Transverse colon (tissue), 4 donors: ENCODE measurements at regions of chr9 and their contacts with region 1.

Region 1: GRCh38 chr9:135840539-135840938 is 66.8 kb downstream of the CAMSAP1 start:
- DNase-seq: no peak
- H3K4me3 ChIP-seq: no peak overlapping the region
- H3K27ac ChIP-seq: no peak overlapping the region
- H3K4me1 ChIP-seq: no peaks in the 10 kb centered on the region
- H3K27me3 ChIP-seq: no peaks in the 10 kb centered on the region
- CTCF ChIP-seq: no peak
- EP300 ChIP-seq: no peak
- POLR2A ChIP-seq: no peak

Region 2: DNA sequence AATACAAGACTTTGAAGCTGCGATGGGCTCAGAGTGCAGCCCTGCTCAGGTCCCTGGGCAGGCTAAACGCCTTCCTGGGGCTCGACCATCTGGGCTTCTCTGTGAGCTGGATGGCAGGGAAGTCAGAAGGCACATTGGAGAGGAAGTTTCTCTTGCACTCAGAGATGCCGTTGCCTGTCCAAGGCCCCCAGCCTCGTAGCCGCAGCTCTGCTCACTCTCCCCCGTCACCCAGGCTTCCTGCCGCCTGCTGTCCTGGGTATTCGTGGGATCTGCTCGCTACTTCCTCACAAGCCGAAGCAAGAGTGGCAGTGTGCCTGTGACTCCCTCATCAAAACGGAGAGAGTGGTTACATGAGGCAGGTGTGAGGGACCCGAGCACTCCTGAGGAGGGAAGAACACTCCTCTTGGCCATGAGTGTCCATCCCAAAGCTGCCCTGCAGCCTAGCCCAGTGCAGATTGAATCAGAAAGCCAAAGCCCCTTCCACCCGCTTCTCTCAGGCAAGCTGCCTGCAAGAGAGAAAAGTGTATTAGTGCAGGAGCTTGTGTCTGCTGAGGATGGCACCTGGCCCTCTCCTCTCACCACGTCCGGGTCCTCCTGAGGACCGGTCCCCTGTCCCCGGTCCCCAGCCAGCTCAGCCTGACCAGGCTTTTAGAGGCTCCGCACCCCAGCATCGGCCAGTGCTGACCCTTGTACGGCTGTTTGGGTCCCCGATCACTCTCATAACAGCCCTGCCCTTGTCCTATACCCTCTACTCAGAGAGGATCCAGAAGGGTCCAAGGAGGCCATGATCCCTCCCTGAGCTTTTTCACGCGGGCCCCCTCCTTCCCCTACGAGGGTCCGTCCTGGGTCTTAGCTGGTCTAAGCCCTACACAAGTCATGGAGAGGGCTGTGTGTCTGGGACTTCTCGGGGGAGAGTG is 952.6 kb before region 1 on chr9:
- in situ Hi-C with region 1: no loop called
- intact Hi-C with region 1: loop called (anchors 5 kb)
- DNase-seq: no peak
- H3K4me3 ChIP-seq: no peak overlapping the region
- H3K27ac ChIP-seq: no peak overlapping the region
- H3K4me1 ChIP-seq: no peaks in the 10 kb centered on the region
- H3K27me3 ChIP-seq: no peaks in the 10 kb centered on the region
- CTCF ChIP-seq: no peak
- EP300 ChIP-seq: no peak
- POLR2A ChIP-seq: no peak

Region 3: GRCh38 chr9:136160381-136160841 is 319.9 kb after region 1 on chr9:
- in situ Hi-C with region 1: no loop called
- intact Hi-C with region 1: no loop called
- DNase-seq: no peak
- H3K4me3 ChIP-seq: no peak overlapping the region
- H3K27ac ChIP-seq: no peak overlapping the region
- H3K4me1 ChIP-seq: no peaks in the 10 kb centered on the region
- H3K27me3 ChIP-seq: peaks cover 34% of the 10 kb centered on the region
- CTCF ChIP-seq: no peak
- EP300 ChIP-seq: no peak
- POLR2A ChIP-seq: no peak